B cell (primary cell): ENCODE measurements at regions of chr6 and their contacts with region 1.

Region 1: GRCh38 chr6:155248008-155249001 is 15.5 kb upstream of the CLDN20 start:
- DNase-seq: peak; percentile 56
- ATAC-seq: peak; percentile 56
- H3K4me3 ChIP-seq: no peak overlapping the region
- H3K4me3 Mint-ChIP-seq: no peak overlapping the region
- H3K27ac ChIP-seq: no peak overlapping the region
- H3K27ac Mint-ChIP-seq: no peak overlapping the region
- H3K4me1 ChIP-seq: no peaks in the 10 kb centered on the region
- H3K4me1 Mint-ChIP-seq: peaks cover 2% of the 10 kb centered on the region
- H3K27me3 ChIP-seq: no peaks in the 10 kb centered on the region
- H3K27me3 Mint-ChIP-seq: no peaks in the 10 kb centered on the region
- CTCF ChIP-seq: peak; percentile 56

Region 2: GRCh38 chr6:154868143-154868594 is 380.1 kb before region 1 on chr6:
- CTCF ChIA-PET with region 1: interaction called, 6 read pairs
- POLR2A ChIA-PET with region 1: no interaction called
- intact Hi-C with region 1: loop called (anchors 1 kb)
- DNase-seq: peak; percentile 44
- ATAC-seq: no peak
- H3K4me3 ChIP-seq: no peak overlapping the region
- H3K4me3 Mint-ChIP-seq: no peak overlapping the region
- H3K27ac ChIP-seq: no peak overlapping the region
- H3K27ac Mint-ChIP-seq: no peak overlapping the region
- H3K4me1 ChIP-seq: no peaks in the 10 kb centered on the region
- H3K4me1 Mint-ChIP-seq: no peaks in the 10 kb centered on the region
- H3K27me3 ChIP-seq: no peaks in the 10 kb centered on the region
- H3K27me3 Mint-ChIP-seq: no peaks in the 10 kb centered on the region
- CTCF ChIP-seq: peak; percentile 72

Region 3: GRCh38 chr6:154928325-154928922 is 319.9 kb before region 1 on chr6:
- CTCF ChIA-PET with region 1: interaction called, 37 read pairs
- POLR2A ChIA-PET with region 1: no interaction called
- intact Hi-C with region 1: loop called (anchors 1 kb)
- DNase-seq: peak; percentile 66
- ATAC-seq: peak; percentile 54
- H3K4me3 ChIP-seq: no peak overlapping the region
- H3K4me3 Mint-ChIP-seq: no peak overlapping the region
- H3K27ac ChIP-seq: no peak overlapping the region
- H3K27ac Mint-ChIP-seq: no peak overlapping the region
- H3K4me1 ChIP-seq: peaks cover 13% of the 10 kb centered on the region in 2 donors
- H3K4me1 Mint-ChIP-seq: peaks cover 19% of the 10 kb centered on the region
- H3K27me3 ChIP-seq: no peaks in the 10 kb centered on the region
- H3K27me3 Mint-ChIP-seq: no peaks in the 10 kb centered on the region
- CTCF ChIP-seq: peak; percentile 88

Region 4: GRCh38 chr6:155001482-155001881 is 246.8 kb before region 1 on chr6:
- CTCF ChIA-PET with region 1: no interaction called
- POLR2A ChIA-PET with region 1: no interaction called
- intact Hi-C with region 1: no loop called
- DNase-seq: no peak
- ATAC-seq: no peak
- H3K4me3 ChIP-seq: no peak overlapping the region
- H3K4me3 Mint-ChIP-seq: no peak overlapping the region
- H3K27ac ChIP-seq: no peak overlapping the region
- H3K27ac Mint-ChIP-seq: no peak overlapping the region
- H3K4me1 ChIP-seq: no peaks in the 10 kb centered on the region
- H3K4me1 Mint-ChIP-seq: no peaks in the 10 kb centered on the region
- H3K27me3 ChIP-seq: peaks cover 0 to 16% (median 3%) of the 10 kb centered on the region in 4 experiments
- H3K27me3 Mint-ChIP-seq: peaks cover 17% of the 10 kb centered on the region
- CTCF ChIP-seq: no peak

Region 5: GRCh38 chr6:155121699-155122098 is 126.6 kb before region 1 on chr6:
- CTCF ChIA-PET with region 1: no interaction called
- POLR2A ChIA-PET with region 1: no interaction called
- intact Hi-C with region 1: no loop called
- DNase-seq: no peak
- ATAC-seq: no peak
- H3K4me3 ChIP-seq: no peak overlapping the region
- H3K4me3 Mint-ChIP-seq: no peak overlapping the region
- H3K27ac ChIP-seq: no peak overlapping the region
- H3K27ac Mint-ChIP-seq: no peak overlapping the region
- H3K4me1 ChIP-seq: no peaks in the 10 kb centered on the region
- H3K4me1 Mint-ChIP-seq: peaks cover 4% of the 10 kb centered on the region
- H3K27me3 ChIP-seq: peaks cover 0 to 3% (median 0%) of the 10 kb centered on the region in 4 experiments
- H3K27me3 Mint-ChIP-seq: no peaks in the 10 kb centered on the region
- CTCF ChIP-seq: no peak

Region 6: GRCh38 chr6:155181498-155181897 is 66.8 kb before region 1 on chr6:
- CTCF ChIA-PET with region 1: interaction called, 92 read pairs
- POLR2A ChIA-PET with region 1: interaction called, 4 read pairs
- intact Hi-C with region 1: loop called (anchors 1 kb)
- DNase-seq: peak; percentile 72
- ATAC-seq: peak; percentile 61
- H3K4me3 ChIP-seq: peak overlapping the region in 1 of 5 experiments; percentile 4
- H3K4me3 Mint-ChIP-seq: peak overlapping the region; percentile 53
- H3K27ac ChIP-seq: peak overlapping the region; percentile 77 to 80
- H3K27ac Mint-ChIP-seq: peak overlapping the region; percentile 76
- H3K4me1 ChIP-seq: peaks cover 26 to 36% of the 10 kb centered on the region in 2 donors
- H3K4me1 Mint-ChIP-seq: peaks cover 41% of the 10 kb centered on the region
- H3K27me3 ChIP-seq: no peaks in the 10 kb centered on the region
- H3K27me3 Mint-ChIP-seq: no peaks in the 10 kb centered on the region
- CTCF ChIP-seq: no peak

Region 7: DNA sequence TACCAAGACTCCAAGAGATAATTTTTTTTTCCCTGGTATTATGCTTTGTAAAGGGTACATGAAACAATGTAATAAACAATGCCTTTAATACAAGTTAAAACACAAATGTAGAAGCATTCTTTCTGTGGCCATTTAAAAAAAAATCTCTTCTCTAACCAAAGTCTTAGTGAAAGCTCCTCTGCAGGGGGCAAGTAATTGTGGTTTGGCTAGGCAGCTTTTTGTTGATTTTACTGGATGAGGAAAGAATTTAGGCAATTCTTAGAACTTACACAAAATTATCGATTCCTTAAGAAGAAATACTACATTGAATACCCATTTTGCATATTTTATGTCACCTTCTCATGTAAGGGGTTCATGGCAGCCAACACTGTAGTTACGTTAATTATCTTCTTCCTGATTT is 53.6 kb after region 1 on chr6:
- CTCF ChIA-PET with region 1: no interaction called
- POLR2A ChIA-PET with region 1: no interaction called
- intact Hi-C with region 1: no loop called
- DNase-seq: no peak
- ATAC-seq: no peak
- H3K4me3 ChIP-seq: no peak overlapping the region
- H3K4me3 Mint-ChIP-seq: no peak overlapping the region
- H3K27ac ChIP-seq: no peak overlapping the region
- H3K27ac Mint-ChIP-seq: no peak overlapping the region
- H3K4me1 ChIP-seq: no peaks in the 10 kb centered on the region
- H3K4me1 Mint-ChIP-seq: peaks cover 4% of the 10 kb centered on the region
- H3K27me3 ChIP-seq: no peaks in the 10 kb centered on the region
- H3K27me3 Mint-ChIP-seq: no peaks in the 10 kb centered on the region
- CTCF ChIP-seq: no peak